Activated naive CD4-positive, alpha-beta T cell treated with anti-CD3 and anti-CD28 coated beads for 36 hours (primary cell): ENCODE measurements at regions of chr12 and their contacts with region 1.

Region 1: GRCh38 chr12:53213348-53213747 is 6.3 kb upstream of the ITGB7 start:
- DNase-seq: peak; percentile 89
- H3K4me3 Mint-ChIP-seq: no peak overlapping the region
- H3K27ac Mint-ChIP-seq: peak overlapping the region; percentile 33
- H3K4me1 Mint-ChIP-seq: peaks cover 42% of the 10 kb centered on the region
- H3K27me3 Mint-ChIP-seq: no peaks in the 10 kb centered on the region

Region 2: GRCh38 chr12:53079226-53080117 is 133.9 kb before region 1 on chr12 and contains the start of gene SPRYD3:
- CTCF ChIA-PET with region 1: no interaction called
- intact Hi-C with region 1: no loop called
- DNase-seq: peak; percentile 98
- H3K4me3 Mint-ChIP-seq: peak within 1 kb of the TSS; percentile 88
- H3K27ac Mint-ChIP-seq: peak within 1 kb of the TSS; percentile 85
- H3K4me1 Mint-ChIP-seq: peaks cover 31% of the 10 kb centered on the region
- H3K27me3 Mint-ChIP-seq: no peaks in the 10 kb centered on the region
- total RNA-seq, gene SPRYD3: 20.1 to 20.2 TPM

Region 3: GRCh38 chr12:53159195-53159839 is 54.0 kb before region 1 on chr12:
- CTCF ChIA-PET with region 1: interaction called, 12 read pairs
- intact Hi-C with region 1: loop called (anchors 2 kb)
- DNase-seq: peak; percentile 97
- H3K4me3 Mint-ChIP-seq: no peak overlapping the region
- H3K27ac Mint-ChIP-seq: peak overlapping the region; percentile 6
- H3K4me1 Mint-ChIP-seq: peaks cover 7% of the 10 kb centered on the region
- H3K27me3 Mint-ChIP-seq: no peaks in the 10 kb centered on the region

Region 4: DNA sequence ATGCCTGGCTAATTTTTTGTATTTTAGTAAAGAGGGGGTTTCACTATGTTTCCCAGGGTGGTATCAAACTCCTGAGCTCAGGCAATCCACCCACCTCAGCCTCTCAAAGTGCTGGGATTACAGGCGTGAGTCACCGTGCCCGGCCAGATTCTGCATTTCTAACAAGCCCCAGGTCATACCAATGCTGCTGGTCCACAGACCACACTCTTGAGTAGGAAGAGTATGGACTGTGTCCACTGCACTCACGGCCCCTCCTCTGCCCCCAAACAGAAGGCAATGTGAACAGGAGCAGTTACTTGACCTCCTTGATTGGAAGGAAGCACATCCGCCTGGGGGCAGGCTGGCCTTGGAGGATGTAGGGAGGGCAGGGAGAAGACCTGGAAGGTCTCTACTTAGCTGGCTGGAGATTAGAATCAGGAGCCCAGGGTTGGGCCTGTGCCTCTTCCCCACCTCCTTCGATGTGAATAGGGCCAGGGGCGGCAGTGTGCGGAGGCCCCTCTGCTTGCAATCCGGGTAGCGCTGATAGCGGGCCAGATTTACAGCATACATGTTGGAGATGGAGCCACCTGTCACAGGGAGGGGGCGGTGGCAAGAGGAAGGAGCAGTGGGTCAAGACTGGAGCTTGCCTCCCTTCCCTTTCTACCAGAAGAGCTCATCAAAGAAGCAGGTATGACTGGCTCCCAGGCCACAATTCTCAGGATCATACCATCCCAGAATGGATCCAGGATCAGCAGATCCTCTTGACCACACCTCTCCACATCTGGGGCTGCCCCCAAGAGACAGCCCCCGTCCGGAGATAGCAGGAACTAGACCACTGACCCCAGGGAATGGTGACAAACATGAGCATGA is 42.2 kb before region 1 on chr12:
- CTCF ChIA-PET with region 1: no interaction called
- intact Hi-C with region 1: no loop called
- DNase-seq: no peak
- H3K4me3 Mint-ChIP-seq: no peak overlapping the region
- H3K27ac Mint-ChIP-seq: no peak overlapping the region
- H3K4me1 Mint-ChIP-seq: peaks cover 3% of the 10 kb centered on the region
- H3K27me3 Mint-ChIP-seq: no peaks in the 10 kb centered on the region

Region 5: GRCh38 chr12:53231826-53232645 is 18.7 kb after region 1 on chr12 and contains the start of gene RARG:
- CTCF ChIA-PET with region 1: interaction called, 12 read pairs
- intact Hi-C with region 1: no loop called
- DNase-seq: peak; percentile 70
- H3K4me3 Mint-ChIP-seq: peak within 1 kb of the TSS; percentile 82
- H3K27ac Mint-ChIP-seq: peak within 1 kb of the TSS; percentile 27
- H3K4me1 Mint-ChIP-seq: peaks cover 59% of the 10 kb centered on the region
- H3K27me3 Mint-ChIP-seq: no peaks in the 10 kb centered on the region
- total RNA-seq, gene RARG: 4.0 to 4.6 TPM

Region 6: DNA sequence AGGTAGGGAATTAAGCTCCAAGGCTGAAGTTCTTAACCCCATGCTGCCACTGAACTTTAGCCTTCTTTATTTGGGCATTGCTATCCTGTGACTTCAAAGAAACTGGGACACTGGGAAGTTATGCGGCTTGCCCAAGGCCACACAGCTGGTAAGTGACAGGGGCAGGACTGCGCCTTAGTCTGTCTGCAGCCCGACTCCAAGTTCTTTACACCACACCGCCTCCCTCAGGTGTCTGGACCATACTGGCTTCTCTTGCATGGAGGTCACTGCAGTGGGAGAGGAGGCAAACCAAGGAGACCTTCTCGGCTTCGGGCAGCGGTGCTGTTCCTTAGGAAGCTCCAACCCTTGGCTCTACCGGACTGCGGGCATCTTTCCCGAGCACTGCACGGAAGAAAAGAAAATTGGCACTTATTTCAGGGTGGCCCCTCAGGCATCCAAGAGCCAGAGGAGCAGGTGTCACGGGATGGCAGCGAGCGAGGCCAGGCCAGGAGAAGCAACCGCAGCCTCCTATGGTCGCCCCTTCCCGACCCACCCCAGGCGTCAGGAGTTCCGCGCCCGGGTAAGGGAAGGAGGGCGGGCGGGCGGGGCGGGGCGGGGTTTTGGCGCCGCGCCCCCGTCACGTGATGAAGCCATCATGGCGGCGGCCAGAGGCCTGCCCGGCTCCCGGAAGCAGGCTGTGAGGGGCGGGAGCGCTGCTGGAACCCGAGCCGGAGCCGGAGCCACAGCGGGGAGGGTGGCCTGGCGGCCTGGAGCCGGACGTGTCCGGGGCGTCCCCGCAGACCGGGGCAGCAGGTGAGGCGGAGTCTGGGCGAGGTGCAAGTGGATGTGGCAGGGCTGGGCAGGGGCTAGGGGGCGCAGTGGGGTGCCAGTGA is 38.4 kb after region 1 on chr12:
- CTCF ChIA-PET with region 1: interaction called, 178 read pairs
- intact Hi-C with region 1: loop called (anchors 1 kb)
- DNase-seq: peak; percentile 85
- H3K4me3 Mint-ChIP-seq: peak overlapping the region; percentile 97
- H3K27ac Mint-ChIP-seq: peak overlapping the region; percentile 87
- H3K4me1 Mint-ChIP-seq: peaks cover 40% of the 10 kb centered on the region
- H3K27me3 Mint-ChIP-seq: no peaks in the 10 kb centered on the region

Region 7: GRCh38 chr12:53287741-53288216 is 74.4 kb after region 1 on chr12:
- CTCF ChIA-PET with region 1: interaction called, 154 read pairs
- intact Hi-C with region 1: loop called (anchors 1 kb)
- DNase-seq: peak; percentile 77
- H3K4me3 Mint-ChIP-seq: no peak overlapping the region
- H3K27ac Mint-ChIP-seq: peak overlapping the region; percentile 32
- H3K4me1 Mint-ChIP-seq: peaks cover 23% of the 10 kb centered on the region
- H3K27me3 Mint-ChIP-seq: no peaks in the 10 kb centered on the region

Region 8: GRCh38 chr12:53344824-53345485 is 131.6 kb after region 1 on chr12:
- CTCF ChIA-PET with region 1: interaction called, 46 read pairs
- intact Hi-C with region 1: loop called (anchors 1 kb)
- DNase-seq: peak; percentile 86
- H3K4me3 Mint-ChIP-seq: peak overlapping the region; percentile 91
- H3K27ac Mint-ChIP-seq: no peak overlapping the region
- H3K4me1 Mint-ChIP-seq: peaks cover 9% of the 10 kb centered on the region
- H3K27me3 Mint-ChIP-seq: no peaks in the 10 kb centered on the region